ACHN (cell line): ENCODE measurements at regions of chr2 and their contacts with region 1.

Region 1: GRCh38 chr2:65545837-65546805 is 113.7 kb upstream of the SPRED2 start:
- DNase-seq: peak; percentile 57

Region 2: DNA sequence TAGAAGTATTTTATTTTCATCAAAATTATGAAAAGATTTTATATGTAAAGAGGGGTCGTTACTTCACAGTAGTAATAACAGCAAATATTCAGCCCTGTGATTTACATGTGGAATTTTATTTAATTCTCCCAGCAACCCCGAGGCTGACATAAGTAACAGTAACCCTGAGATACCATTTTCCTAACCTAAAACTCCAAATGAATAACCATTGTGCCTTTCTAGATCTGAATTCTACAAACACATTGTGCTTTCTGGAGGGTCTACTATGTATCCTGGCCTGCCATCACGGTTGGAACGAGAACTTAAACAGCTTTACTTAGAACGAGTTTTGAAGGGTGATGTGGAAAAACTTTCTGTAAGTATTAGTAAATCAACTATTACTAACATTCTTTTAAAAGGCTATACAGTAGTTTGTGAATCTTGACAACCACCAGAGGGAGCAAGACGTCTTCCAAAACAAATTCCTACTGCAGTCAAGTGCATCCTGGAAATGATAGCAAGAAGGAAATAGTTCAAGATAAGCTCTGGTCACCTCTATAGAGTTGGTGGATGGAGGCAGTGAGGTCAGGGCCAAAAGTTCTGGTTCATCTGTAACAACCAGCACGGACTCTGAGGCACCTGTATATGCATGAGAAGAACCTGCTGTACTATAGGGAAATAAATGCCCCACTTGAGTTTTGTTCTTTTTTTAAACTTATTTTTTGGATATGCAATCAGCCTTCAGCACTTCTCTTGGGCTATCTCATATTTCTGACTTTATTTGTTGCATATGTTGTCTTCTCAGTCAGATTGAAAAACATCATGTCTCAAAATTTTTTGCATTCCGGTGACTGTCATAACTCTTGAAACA is 281.1 kb before region 1 on chr2:
- in situ Hi-C with region 1: loop called (anchors 25 kb)
- DNase-seq: peak; percentile 81

Region 3: DNA sequence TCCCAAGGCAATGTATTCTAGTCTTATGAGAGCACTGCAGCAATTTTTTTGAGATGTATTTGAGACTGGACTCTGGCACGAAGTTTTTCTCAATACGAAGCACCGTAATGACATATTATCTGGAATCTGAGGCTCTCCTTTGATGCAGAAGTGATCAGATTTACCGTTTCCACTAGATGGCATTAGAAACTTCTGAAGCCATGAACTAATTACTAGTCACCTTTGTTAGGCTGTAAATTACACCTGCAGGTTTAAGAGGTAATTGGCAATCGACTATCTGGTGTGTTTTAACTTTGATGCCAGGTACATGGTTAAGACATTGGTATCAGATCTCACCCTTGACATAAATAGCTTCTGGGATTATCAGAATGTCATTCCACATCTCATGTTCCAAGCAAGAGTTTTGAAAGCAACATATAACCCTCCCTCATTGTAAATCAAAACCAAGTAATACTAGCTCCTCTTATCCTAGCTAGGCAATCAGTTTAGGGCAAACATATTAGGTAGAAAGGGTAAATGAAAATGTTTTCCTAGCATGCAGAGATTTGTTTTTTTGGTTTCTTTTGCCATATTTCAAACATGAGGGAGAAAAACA is 140.9 kb after region 1 on chr2:
- in situ Hi-C with region 1: no loop called
- DNase-seq: no peak